Activated CD4-positive, alpha-beta T cell treated with anti-CD3 and anti-CD28 coated beads for 36 hours (primary cell): ENCODE measurements at regions of chr6 and their contacts with region 1.

Region 1: DNA sequence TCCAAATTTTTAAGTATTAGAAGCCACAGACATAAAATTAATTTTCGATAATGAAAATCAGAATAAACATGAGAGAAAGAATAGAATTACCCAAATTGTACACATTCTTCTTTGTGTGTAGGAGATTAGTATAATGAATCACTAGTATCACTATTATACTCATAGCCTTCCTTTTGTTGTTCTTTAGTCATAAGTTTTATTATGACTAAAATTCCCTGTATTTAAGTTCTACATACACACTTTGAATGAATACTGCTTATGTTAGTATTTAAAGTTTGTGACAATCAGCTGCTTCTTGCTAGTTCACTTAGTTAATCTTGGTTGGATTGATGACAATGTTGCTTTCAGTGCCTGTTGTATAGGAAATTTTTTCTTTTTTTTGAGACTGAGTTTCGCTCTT is 72.7 kb downstream of the CCDC170 start:
- DNase-seq: no peak
- ATAC-seq: peak; percentile 96
- H3K4me3 Mint-ChIP-seq: no peak overlapping the region
- H3K27ac Mint-ChIP-seq: no peak overlapping the region
- H3K4me1 Mint-ChIP-seq: peaks cover 4% of the 10 kb centered on the region
- H3K27me3 Mint-ChIP-seq: peaks cover 11% of the 10 kb centered on the region

Region 2: DNA sequence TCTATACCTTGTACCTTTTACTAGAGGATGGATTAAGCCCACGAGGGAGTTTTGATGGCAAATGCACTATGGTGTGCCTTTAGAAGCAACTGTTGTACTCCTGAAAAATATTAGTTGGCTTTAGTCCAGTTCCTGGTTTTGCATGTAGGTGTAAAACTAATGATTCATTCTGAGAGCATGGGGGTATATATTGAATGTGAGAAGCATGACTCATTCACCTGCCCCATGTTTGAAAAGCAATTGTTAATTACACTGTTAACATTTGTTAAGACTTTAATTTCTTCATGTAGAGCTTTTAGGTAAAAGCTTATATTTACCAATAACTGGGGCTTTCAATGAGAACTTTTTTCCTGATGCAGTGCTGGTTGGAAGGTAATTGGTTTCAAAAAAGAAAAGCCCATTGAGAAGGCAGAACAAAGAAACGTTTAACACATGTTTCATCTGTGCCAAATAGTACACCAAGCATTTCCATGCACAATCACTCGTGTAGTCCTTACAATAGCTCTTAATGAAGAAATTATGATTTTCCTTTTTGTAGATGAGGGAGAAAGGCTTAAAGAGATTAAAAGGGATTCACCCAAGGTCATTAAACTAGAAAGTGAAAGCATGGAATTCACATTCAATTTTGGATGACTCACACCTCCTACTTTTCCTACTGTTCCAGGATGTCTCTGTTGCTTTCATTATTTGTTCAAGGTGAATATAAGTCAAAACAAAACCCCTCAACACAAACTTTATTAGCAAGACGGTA is 61.3 kb after region 1 on chr6:
- CTCF ChIA-PET with region 1: no interaction called
- POLR2A ChIA-PET with region 1: no interaction called
- intact Hi-C with region 1: loop called in 1 of 2 experiments (anchors 5 kb)
- DNase-seq: no peak
- ATAC-seq: peak; percentile 83
- H3K4me3 Mint-ChIP-seq: no peak overlapping the region
- H3K27ac Mint-ChIP-seq: no peak overlapping the region
- H3K4me1 Mint-ChIP-seq: peaks cover 18% of the 10 kb centered on the region
- H3K27me3 Mint-ChIP-seq: peaks cover 18% of the 10 kb centered on the region

Region 3: GRCh38 chr6:151633511-151634335 is 67.2 kb after region 1 on chr6:
- CTCF ChIA-PET with region 1: no interaction called
- POLR2A ChIA-PET with region 1: no interaction called
- intact Hi-C with region 1: loop called (anchors 2 to 5 kb)
- DNase-seq: no peak
- ATAC-seq: peak; percentile 72
- H3K4me3 Mint-ChIP-seq: no peak overlapping the region
- H3K27ac Mint-ChIP-seq: no peak overlapping the region
- H3K4me1 Mint-ChIP-seq: peaks cover 7% of the 10 kb centered on the region
- H3K27me3 Mint-ChIP-seq: peaks cover 24% of the 10 kb centered on the region